ENCODE measurements at regions of chr5 and their contacts with region 1.

Region 1: GRCh38 chr5:122137702-122138101 is 8.4 kb downstream of the ZNF474 start:
- DNase-seq: peak in 23 of 35 experiments; percentile 2 to 46 (median 11)
- ATAC-seq: peak in 3 of 4 experiments; percentile 70 to 90 (median 79)
- H3K4me3 ChIP-seq: no peak overlapping the region
- H3K4me3 Mint-ChIP-seq: peak overlapping the region in 1 of 3 donors; percentile 20
- H3K27ac ChIP-seq: no peak overlapping the region
- H3K27ac Mint-ChIP-seq: no peak overlapping the region
- H3K4me1 ChIP-seq: peaks cover 5 to 12% of the 10 kb centered on the region in 2 experiments
- H3K4me1 Mint-ChIP-seq: peaks cover 16 to 20% (median 17%) of the 10 kb centered on the region in 3 donors
- H3K27me3 ChIP-seq: no peaks in the 10 kb centered on the region
- H3K27me3 Mint-ChIP-seq: peaks cover 0 to 4% of the 10 kb centered on the region in 2 donors

Region 2: DNA sequence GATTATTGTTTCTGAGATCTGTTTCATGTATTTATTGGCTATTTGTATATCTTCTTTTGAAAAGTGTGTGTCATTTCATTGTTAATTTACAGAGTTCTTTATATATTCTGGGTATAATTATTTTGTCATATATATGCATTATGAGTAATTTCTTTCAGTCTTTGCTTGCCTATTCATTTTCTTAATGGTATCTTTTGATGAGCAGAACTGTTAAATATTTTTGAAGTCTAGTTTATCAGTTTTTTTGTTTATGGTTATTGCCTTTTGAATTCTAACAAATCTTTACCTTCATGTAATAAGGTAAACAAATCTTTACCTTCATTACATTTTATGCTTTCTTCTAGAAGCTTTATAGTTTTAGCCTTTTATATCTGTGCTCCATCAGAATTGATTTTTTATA is 1440.7 kb after region 1 on chr5:
- CTCF ChIA-PET with region 1: no interaction called
- POLR2A ChIA-PET with region 1: interaction called in 1 of 2 experiments, 12 read pairs
- DNase-seq: no peak
- ATAC-seq: no peak
- H3K4me3 ChIP-seq: no peak overlapping the region
- H3K4me3 Mint-ChIP-seq: no peak overlapping the region
- H3K27ac ChIP-seq: no peak overlapping the region
- H3K27ac Mint-ChIP-seq: no peak overlapping the region
- H3K4me1 ChIP-seq: no peaks in the 10 kb centered on the region
- H3K4me1 Mint-ChIP-seq: no peaks in the 10 kb centered on the region
- H3K27me3 ChIP-seq: no peaks in the 10 kb centered on the region
- H3K27me3 Mint-ChIP-seq: no peaks in the 10 kb centered on the region